CD4-positive, alpha-beta T cell (primary cell): ENCODE measurements at regions of chr9 and their contacts with region 1.

Region 1: DNA sequence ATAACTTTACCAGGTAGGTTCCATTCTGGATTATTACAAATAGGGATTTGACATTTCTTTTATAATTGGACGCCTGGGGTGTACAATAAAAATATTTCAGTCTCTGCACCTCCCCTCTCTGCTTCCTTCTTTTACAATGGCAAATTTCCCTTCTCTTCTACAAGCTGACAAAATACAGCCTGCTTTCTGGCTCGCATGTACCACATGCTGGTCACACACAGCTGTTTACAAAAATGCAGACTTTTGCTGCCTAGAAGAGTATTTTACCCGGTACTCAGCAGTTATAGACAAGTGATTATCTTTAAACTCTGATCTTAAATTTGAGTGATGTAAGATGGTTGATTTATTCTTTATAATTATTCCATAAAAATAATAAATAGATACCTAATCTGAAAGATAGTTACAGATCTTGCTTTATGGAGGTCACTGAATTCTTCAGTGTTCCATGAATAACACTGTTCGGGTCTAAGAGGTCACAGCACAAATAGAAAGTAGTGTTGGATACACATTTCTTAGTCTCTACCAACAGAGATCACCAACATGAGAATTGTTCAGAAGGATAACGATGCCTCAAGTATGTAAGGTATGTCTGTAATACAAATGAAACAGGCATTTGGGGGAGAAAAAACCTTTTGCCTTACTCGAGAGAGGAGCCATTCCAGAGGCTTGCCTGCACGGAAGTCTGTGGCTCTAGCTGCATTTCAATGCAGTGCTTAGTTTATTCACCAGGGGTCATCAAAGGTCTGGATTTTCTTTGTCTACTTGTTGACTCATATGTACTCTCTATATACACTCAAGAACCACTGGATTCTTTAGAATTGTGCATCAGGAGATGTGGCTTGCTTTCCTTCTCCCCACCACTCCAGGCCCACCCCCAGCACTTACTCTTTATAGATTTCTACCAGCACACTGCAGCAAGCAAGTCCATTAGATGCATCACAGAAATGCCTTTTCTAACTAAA is 206.6 kb upstream of the RFX3 start:
- DNase-seq: peak in 6 of 14 experiments; percentile 1 to 66 (median 46)
- ATAC-seq: peak; percentile 91
- H3K4me3 ChIP-seq: no peak overlapping the region
- H3K4me3 Mint-ChIP-seq: no peak overlapping the region
- H3K27ac ChIP-seq: no peak overlapping the region
- H3K27ac Mint-ChIP-seq: no peak overlapping the region
- H3K4me1 ChIP-seq: peaks cover 4% of the 10 kb centered on the region
- H3K4me1 Mint-ChIP-seq: peaks cover 5% of the 10 kb centered on the region
- H3K27me3 ChIP-seq: no peaks in the 10 kb centered on the region
- H3K27me3 Mint-ChIP-seq: no peaks in the 10 kb centered on the region
- CTCF ChIP-seq: peak; percentile 43

Region 2: GRCh38 chr9:3692606-3693005 is 39.8 kb before region 1 on chr9:
- CTCF ChIA-PET with region 1: no interaction called
- POLR2A ChIA-PET with region 1: no interaction called
- intact Hi-C with region 1: no loop called
- DNase-seq: no peak
- ATAC-seq: no peak
- H3K4me3 ChIP-seq: no peak overlapping the region
- H3K4me3 Mint-ChIP-seq: no peak overlapping the region
- H3K27ac ChIP-seq: no peak overlapping the region
- H3K27ac Mint-ChIP-seq: no peak overlapping the region
- H3K4me1 ChIP-seq: no peaks in the 10 kb centered on the region
- H3K4me1 Mint-ChIP-seq: no peaks in the 10 kb centered on the region
- H3K27me3 ChIP-seq: no peaks in the 10 kb centered on the region
- H3K27me3 Mint-ChIP-seq: peaks cover 5% of the 10 kb centered on the region
- CTCF ChIP-seq: no peak

Region 3: DNA sequence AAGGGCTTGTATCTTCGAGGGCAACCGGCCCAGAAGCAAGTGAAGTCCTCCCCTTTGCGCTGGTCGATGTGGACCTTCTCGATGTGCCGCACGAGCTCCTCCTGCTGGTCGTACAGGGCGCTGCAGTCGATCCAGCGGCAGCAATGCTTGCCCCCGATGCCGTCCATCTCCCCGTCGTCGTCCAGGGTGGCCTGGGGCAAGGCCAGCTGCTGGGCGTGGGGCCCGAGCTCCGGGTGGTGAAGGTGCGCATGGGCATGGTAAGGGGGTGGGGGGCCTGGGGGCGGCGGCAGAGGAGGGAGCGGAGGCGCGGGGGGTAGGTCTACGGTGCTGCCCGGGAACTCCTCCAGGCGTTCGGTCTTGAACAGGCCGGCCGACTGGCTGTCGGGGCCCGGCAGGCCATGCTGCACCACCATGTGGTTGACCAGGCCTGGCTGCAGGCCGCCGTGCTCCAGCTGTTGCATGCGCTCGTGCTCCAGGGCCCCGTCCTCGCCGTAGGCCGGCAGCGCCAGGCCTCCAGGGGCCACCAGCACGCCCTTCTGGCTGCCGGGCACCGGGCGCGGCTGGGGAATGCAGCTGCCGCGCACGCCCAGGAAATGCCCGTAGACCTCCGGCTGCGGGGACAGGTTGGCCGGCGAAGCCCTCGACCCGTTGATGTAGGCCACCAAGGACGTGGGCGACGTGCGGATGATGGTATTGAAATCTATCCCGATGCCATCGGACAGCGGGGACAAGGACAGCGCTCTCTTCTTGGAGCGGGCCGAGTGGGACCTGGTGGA is 385.7 kb after region 1 on chr9:
- CTCF ChIA-PET with region 1: no interaction called
- POLR2A ChIA-PET with region 1: no interaction called
- intact Hi-C with region 1: loop called in 1 of 2 experiments (anchors 5 kb)
- DNase-seq: peak; percentile 11 to 58 (median 28)
- ATAC-seq: no peak
- H3K4me3 ChIP-seq: no peak overlapping the region
- H3K4me3 Mint-ChIP-seq: no peak overlapping the region
- H3K27ac ChIP-seq: no peak overlapping the region
- H3K27ac Mint-ChIP-seq: no peak overlapping the region
- H3K4me1 ChIP-seq: no peaks in the 10 kb centered on the region
- H3K4me1 Mint-ChIP-seq: no peaks in the 10 kb centered on the region
- H3K27me3 ChIP-seq: no peaks in the 10 kb centered on the region
- H3K27me3 Mint-ChIP-seq: no peaks in the 10 kb centered on the region
- CTCF ChIP-seq: peak; percentile 48

Region 4: GRCh38 chr9:4339357-4339756 is 607.0 kb after region 1 on chr9:
- CTCF ChIA-PET with region 1: no interaction called
- POLR2A ChIA-PET with region 1: no interaction called
- intact Hi-C with region 1: loop called (anchors 2 kb)
- DNase-seq: peak; percentile 65 to 85 (median 75)
- ATAC-seq: peak; percentile 94
- H3K4me3 ChIP-seq: no peak overlapping the region
- H3K4me3 Mint-ChIP-seq: peak overlapping the region; percentile 26
- H3K27ac ChIP-seq: no peak overlapping the region
- H3K27ac Mint-ChIP-seq: peak overlapping the region; percentile 44
- H3K4me1 ChIP-seq: peaks cover 4% of the 10 kb centered on the region
- H3K4me1 Mint-ChIP-seq: peaks cover 7% of the 10 kb centered on the region
- H3K27me3 ChIP-seq: no peaks in the 10 kb centered on the region
- H3K27me3 Mint-ChIP-seq: no peaks in the 10 kb centered on the region
- CTCF ChIP-seq: peak; percentile 85

Region 5: GRCh38 chr9:4366591-4367330 is 634.4 kb after region 1 on chr9:
- CTCF ChIA-PET with region 1: no interaction called
- POLR2A ChIA-PET with region 1: no interaction called
- intact Hi-C with region 1: loop called in 1 of 2 experiments (anchors 2 kb)
- DNase-seq: peak in 9 of 14 experiments; percentile 5 to 57 (median 16)
- ATAC-seq: no peak
- H3K4me3 ChIP-seq: no peak overlapping the region
- H3K4me3 Mint-ChIP-seq: no peak overlapping the region
- H3K27ac ChIP-seq: no peak overlapping the region
- H3K27ac Mint-ChIP-seq: no peak overlapping the region
- H3K4me1 ChIP-seq: no peaks in the 10 kb centered on the region
- H3K4me1 Mint-ChIP-seq: no peaks in the 10 kb centered on the region
- H3K27me3 ChIP-seq: no peaks in the 10 kb centered on the region
- H3K27me3 Mint-ChIP-seq: no peaks in the 10 kb centered on the region
- CTCF ChIP-seq: peak; percentile 54

Region 6: DNA sequence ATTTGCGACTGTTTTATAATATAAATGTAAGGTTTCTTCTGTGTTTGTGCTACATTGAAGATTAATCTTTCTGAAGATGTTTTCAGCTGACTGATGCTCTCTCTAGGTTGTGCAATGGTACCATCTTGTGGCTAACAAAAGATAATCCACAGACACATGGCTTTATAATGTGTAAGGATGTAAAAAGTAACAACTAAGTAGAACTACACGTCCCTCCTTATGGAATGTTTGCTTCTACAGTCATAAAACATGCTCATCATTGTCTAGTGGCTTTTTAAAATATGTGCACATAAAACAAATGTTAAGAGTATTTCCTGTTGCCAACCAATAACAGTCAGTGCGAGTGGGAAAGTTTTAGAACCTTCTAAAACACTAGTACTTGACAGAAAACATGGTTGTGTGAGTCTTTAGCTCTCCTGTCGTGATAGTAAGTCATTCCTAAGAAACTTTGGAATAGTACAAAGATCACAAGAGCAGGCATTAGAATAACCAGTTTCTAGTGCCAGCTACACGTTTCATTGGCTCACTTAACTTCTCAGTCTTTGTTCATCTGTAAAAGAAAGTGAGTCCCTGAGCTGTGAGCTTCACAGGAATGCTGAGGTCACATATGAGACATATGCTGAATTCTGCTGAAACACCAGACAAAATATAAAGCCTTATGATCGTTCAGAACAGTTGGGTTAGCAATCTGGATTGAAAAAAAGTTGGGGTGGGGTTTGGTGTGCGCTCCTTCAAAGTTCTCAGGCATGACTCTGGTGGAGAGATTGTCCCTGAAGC is 643.3 kb after region 1 on chr9:
- CTCF ChIA-PET with region 1: interaction called, 5 read pairs
- POLR2A ChIA-PET with region 1: no interaction called
- intact Hi-C with region 1: loop called in 1 of 2 experiments (anchors 1 kb)
- DNase-seq: peak in 3 of 14 experiments; percentile 14 to 45 (median 36)
- ATAC-seq: no peak
- H3K4me3 ChIP-seq: no peak overlapping the region
- H3K4me3 Mint-ChIP-seq: no peak overlapping the region
- H3K27ac ChIP-seq: no peak overlapping the region
- H3K27ac Mint-ChIP-seq: no peak overlapping the region
- H3K4me1 ChIP-seq: no peaks in the 10 kb centered on the region
- H3K4me1 Mint-ChIP-seq: no peaks in the 10 kb centered on the region
- H3K27me3 ChIP-seq: no peaks in the 10 kb centered on the region
- H3K27me3 Mint-ChIP-seq: peaks cover 15% of the 10 kb centered on the region
- CTCF ChIP-seq: no peak